Uterus (tissue), 4 donors: ENCODE measurements at regions of chr2 and their contacts with region 1.

Region 1: DNA sequence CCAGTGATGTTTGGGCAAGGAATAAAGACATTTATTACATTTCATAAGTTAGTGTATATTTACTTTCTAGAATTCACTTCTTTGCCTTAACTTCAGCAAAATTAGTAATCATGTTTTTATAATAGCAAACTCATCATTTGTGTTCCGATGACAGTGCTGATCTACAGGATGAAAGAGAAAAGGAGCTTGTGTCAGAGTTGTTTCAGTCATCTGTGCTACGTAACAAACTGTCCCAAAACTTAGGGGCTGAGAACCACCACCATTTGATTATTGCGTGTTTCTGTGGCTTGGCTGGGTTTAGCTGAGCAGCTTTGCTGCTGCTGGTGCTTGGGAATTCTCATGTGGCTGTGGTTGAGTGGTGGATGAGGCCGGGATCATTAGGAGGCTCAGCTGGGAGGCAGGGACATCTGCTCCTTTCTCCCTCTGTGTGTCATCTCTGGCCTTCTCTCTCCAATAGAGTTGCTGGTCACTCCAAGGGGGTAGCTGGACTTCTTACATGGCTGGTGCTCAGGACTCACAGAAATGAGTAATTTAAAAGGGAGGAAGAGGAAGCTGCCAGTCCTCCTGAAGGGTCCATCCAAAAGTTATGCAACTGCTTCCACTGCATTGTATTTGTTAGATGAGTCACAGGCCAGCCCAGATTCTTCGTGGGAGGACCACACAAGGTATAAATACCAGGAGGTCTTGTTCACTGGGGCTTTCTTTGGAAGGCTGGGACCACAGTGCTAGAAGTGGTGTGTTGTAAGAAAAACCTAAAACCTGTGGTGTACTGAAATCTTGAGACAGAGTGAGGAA is 43.4 kb upstream of the HAAO start:
- DNase-seq: peak; percentile 75 to 89
- H3K4me3 ChIP-seq: no peak overlapping the region
- H3K27ac ChIP-seq: peak overlapping the region; percentile 47 to 81
- H3K4me1 ChIP-seq: no peaks in the 10 kb centered on the region
- H3K27me3 ChIP-seq: no peaks in the 10 kb centered on the region
- CTCF ChIP-seq: no peak
- POLR2A ChIP-seq: peak in 1 of 2 donors; percentile 27

Region 2: DNA sequence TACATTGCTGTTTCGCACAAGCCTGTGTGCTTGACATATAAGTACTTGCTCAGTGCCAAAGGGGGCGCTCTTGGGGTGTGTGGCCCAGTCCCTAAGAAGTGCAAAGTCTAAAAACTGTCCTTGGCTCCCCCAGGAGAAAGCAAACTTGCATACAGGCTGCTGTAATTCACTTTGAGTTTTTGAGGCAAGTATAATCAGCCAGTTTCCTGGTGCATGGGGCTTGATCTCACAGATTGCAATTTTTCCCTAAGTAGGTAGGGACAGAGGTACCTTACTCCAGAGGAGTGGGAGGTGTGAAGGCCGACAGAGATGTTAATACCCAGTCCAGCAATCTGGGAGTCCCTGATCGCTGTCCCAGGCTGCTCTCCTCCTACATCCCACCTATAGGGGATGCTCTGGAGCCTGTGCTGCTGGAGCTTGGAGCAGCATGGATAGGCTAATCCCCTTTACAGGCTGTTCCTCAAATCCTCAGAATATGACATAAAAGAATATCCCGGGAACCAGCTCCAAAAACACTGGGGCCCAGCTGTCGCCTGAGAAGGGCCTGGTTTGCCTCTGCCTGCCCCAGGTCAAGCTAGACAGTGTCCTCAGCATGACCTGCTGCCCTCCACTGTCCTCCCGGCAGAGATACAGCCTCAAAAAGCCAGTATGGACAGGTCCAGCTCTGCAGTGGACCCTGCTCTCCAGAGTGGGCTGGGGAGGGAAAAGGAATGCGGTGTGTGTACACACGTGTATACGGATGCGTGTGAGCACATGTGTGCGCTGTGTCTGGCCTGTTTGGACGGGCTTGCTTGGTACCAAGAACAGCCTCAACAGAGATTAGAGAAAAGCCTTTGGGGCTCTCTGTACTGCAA is 93.1 kb after region 1 on chr2:
- intact Hi-C with region 1: loop called (anchors 10 kb)
- DNase-seq: no peak
- H3K4me3 ChIP-seq: no peak overlapping the region
- H3K27ac ChIP-seq: peak overlapping the region; percentile 93 to 98
- H3K4me1 ChIP-seq: peaks cover 34 to 60% of the 10 kb centered on the region in 2 donors
- H3K27me3 ChIP-seq: no peaks in the 10 kb centered on the region
- CTCF ChIP-seq: peak; percentile 15 to 32 (median 26)
- POLR2A ChIP-seq: no peak